Panc1 (cell line): ENCODE measurements at regions of chr18 and their contacts with region 1.

Region 1: GRCh38 chr18:12470382-12471075 is 62.8 kb downstream of the PRELID3A start:
- DNase-seq: no peak
- ATAC-seq: no peak
- H3K4me3 ChIP-seq: no peak overlapping the region
- H3K27ac ChIP-seq: no peak overlapping the region
- H3K4me1 ChIP-seq: no peaks in the 10 kb centered on the region
- H3K27me3 ChIP-seq: no peaks in the 10 kb centered on the region
- CTCF ChIP-seq: no peak

Region 2: DNA sequence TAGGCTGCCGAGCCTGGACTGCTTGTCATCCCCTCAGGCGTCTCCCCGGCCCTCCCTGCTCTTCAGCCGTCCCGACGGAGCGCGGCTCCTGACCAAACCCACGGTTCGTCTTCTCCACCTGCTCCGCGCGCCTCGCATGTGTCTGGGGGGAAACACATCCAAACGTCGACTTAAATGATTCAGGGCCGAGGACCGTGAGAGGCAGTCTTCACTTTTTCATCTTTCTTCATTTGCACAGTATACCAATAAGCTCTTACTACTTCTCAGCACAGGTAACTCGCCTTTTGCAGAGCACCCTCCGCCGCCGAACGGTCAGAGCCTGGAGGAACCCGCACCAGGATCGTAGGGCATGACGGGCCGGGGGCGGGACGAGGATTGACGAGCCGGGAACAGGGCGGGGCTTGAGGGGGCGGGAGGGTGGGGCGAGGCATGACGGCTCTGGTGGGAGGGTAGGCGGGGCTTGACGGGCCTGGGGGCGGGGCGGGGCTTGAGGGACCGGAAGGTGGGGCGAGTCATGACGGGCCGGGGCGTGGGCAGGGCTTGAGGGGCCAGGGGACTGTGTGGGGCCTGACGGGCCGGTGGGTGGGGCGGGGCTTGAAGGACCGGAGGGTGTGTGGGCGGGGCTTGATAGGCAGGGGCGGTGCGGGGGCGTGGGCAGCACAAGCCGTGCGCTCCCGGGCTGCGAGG is 477.0 kb after region 1 on chr18 and contains the start of gene SEH1L:
- CTCF ChIA-PET with region 1: no interaction called
- POLR2A ChIA-PET with region 1: interaction called, 15 read pairs
- in situ Hi-C with region 1: no loop called
- intact Hi-C with region 1: no loop called
- DNase-seq: peak; percentile 50
- ATAC-seq: peak; percentile 94
- H3K4me3 ChIP-seq: peak within 1 kb of the TSS; percentile 74 to 87
- H3K27ac ChIP-seq: peak within 1 kb of the TSS; percentile 93
- H3K4me1 ChIP-seq: peaks cover 27% of the 10 kb centered on the region
- H3K27me3 ChIP-seq: no peaks in the 10 kb centered on the region
- CTCF ChIP-seq: no peak
- total RNA-seq, gene SEH1L: 86.5 TPM